Activated T-helper 2 cell treated with anti-CD3 and anti-CD28 coated beads, Interferon-gamma antibody, Interleukin-2, Interleukin-4, amounts not matched to agents 10 μg/mL and 5 μg/mL and 100 μg/mL, durations not matched to agents 14 hours and 24 hours and 36 hours (primary cell): ENCODE measurements at regions of chr12 and their contacts with region 1.

Region 1: DNA sequence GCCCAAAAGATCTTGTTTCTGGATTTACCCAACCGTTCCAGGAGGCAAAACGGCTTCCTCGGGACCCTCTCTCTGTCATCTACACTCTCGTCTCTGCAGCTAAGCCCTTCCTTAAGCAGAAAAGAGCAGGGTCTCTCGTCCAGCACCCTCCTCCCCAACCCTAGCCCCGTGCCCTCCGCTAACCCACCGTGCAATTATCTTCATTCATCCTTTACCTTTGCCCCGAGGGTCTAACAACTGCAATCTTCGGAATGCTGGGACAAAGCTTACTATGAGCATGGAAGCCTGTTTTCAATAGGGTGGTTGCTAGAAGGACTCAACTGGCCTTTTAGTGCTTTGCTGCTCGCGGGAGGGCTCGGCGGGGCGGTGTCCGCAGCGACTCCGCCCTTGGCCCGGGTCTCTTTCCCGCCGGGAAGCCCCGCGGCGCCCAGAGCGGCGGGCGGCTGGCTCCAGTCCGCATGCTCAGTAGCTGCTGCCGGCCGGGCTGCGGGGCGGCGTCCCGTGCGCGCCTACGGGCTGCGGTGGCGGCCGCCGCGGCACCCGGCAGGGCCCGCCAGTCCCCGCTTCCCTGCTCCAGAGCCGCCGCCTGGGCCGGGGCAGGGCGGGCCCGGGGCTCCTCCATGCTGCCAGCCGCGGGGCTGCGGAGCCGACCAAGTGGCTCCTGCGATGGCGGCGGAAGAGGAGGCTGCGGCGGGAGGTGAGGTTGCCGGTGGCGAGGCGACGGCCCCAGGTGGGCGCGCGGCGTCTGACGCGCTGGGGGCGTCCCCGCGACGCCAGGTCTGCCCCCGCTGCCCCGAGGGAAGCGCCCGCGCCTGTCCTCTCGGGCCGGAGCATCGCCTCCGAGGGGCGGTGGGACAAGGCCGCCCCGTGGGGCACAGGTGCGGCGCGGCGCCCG is at the start of gene BMAL2:
- DNase-seq: peak; percentile 40
- H3K4me3 Mint-ChIP-seq: peak within 1 kb of the TSS; percentile 98
- H3K27ac Mint-ChIP-seq: peak within 1 kb of the TSS; percentile 96
- H3K4me1 Mint-ChIP-seq: peaks cover 50% of the 10 kb centered on the region
- H3K27me3 Mint-ChIP-seq: no peaks in the 10 kb centered on the region
- total RNA-seq, gene BMAL2: 58.9 and 59.6 TPM in 2 replicates

Region 2: DNA sequence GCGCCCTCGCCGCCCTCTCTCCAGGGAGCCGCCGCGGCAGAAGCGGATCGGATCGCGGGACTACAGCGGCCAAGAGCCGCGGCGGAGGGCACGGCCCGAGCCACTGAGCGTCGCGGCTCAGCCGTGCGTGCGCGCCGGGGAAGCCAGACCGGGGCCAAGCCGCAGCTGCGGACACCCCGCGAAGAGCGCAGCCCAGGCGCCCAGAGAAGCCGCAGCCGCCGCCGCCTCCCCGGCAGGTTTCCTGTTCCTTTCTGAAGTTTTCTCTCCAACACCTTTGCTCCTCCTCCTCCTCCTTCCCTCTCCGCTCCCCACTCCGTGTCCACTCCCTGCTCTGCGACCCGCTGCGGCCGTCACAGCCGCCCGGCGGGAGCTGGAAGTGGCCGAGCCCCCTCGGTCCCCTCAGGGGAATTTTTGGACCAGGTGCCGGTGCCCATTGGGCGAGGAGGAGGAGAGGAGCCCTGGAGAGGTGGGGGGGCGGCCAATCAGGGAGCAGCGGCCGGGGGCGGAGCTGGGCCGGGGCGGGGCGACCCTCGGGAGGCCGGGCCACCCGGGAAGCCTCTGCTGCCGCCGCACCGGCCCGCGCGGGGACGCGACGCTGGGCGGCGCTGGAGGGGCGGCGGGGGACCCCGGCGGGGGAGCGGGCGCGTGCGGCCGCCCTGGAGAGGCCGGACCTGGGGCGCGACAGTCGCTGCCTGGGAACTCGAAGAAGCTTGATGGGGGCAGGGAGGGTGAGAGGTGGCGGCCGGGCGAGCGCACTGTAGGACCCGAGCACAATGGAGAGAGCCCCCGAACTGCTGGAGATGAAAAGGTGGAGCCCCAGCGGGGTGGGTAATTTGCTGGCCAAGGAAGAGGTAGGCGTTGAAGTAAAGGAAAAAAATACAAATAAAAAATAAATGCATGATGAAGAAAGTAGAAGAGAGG is 499.6 kb before region 1 on chr12 and contains the start of gene ITPR2:
- intact Hi-C with region 1: loop called (anchors 2 kb)
- DNase-seq: peak; percentile 88
- H3K4me3 Mint-ChIP-seq: peak within 1 kb of the TSS; percentile 95
- H3K27ac Mint-ChIP-seq: peak within 1 kb of the TSS; percentile 98
- H3K4me1 Mint-ChIP-seq: peaks cover 46% of the 10 kb centered on the region
- H3K27me3 Mint-ChIP-seq: no peaks in the 10 kb centered on the region
- total RNA-seq, gene ITPR2: 49.3 and 49.6 TPM in 2 replicates

Region 3: DNA sequence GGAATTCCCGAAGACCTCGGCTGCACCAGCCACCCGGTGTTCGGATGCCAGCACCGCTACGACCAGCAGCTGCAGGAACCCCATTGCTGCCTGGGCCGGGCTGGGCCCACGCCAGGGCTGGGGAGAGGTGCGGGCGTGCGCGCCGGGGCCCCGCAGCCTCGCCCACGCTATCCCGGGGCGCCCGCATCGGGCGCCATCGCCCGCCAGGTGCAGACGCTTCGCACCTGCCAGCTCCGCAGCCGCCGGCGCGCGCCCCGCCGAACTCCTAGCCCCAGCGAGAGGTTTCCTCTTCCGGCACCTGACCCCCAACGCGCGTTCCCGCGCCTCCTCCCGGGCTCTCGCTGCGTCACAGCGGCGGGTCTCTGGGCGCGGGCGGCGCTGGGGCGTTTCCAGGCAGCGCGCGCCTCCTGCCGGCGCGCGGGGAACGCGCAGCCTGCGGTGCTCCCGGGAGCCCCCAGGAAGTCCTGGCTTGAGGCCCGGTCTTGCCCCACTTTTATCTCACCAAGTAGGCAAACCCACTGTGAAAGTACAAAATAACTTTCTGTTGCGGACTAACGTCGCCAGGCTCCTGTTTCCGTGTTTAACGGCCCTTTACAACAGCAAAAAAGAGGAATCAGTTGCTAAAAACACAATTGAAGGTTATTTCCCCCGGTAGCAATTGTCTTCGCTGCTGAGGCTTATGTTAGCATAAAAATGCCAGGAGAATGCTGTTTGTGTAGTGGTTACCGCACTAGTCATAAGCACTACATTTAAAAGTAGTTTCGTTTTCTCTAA is 318.4 kb before region 1 on chr12 and contains the start of gene TM7SF3:
- intact Hi-C with region 1: loop called (anchors 2 kb)
- DNase-seq: peak; percentile 94
- H3K4me3 Mint-ChIP-seq: peak within 1 kb of the TSS; percentile 93
- H3K27ac Mint-ChIP-seq: peak within 1 kb of the TSS; percentile 89
- H3K4me1 Mint-ChIP-seq: peaks cover 57% of the 10 kb centered on the region
- H3K27me3 Mint-ChIP-seq: no peaks in the 10 kb centered on the region
- total RNA-seq, gene TM7SF3: 46.7 and 51.5 TPM in 2 replicates

Region 4: DNA sequence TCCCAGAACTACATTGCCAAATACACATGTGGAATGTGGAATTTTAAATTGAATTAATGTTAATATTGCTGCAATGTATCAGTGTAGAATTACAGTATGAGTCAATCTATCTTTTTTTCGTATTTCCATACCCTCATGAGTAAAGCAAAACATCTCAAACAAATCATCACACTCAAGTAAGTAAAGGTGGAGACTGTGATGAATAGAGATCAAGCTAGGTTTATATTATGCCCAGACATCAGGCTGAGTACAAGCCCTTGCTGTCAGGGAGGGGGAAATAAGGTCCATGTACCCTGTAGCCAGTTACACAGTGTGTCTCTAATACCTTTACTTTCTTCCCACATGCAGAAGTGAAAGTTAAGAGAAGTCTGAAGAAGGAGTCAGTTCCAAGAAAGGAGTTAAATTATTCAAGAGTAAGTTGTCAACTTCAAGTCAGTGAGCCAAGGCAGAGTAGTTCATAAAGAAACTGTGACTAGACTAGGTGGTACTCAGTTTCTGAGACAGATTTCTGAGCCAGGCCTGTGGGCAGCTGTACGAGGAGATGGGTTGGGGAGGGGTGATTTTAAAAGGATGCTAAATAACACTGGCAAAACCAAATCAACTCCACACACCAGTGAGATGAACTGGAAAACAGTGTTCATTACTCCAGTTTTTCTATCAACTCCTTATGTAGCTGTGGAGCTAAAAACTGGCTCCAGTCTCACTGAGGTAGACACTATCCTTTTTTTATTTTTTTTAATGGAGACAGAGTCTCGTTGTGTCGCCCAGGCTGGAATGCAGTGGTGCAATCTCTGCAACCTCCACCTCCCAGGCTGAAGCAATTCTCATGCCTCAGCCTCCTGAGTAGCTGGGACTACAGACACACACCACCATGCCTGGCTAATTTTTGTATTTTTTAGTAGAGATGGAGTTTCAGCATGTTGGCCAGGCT is 112.3 kb before region 1 on chr12:
- intact Hi-C with region 1: no loop called
- DNase-seq: no peak
- H3K4me3 Mint-ChIP-seq: no peak overlapping the region
- H3K27ac Mint-ChIP-seq: peak overlapping the region; percentile 34
- H3K4me1 Mint-ChIP-seq: peaks cover 15% of the 10 kb centered on the region
- H3K27me3 Mint-ChIP-seq: no peaks in the 10 kb centered on the region

Region 5: GRCh38 chr12:27243804-27244683 is 88.6 kb before region 1 on chr12 and contains the start of gene STK38L:
- intact Hi-C with region 1: loop called (anchors 5 kb)
- DNase-seq: peak; percentile 96
- H3K4me3 Mint-ChIP-seq: peak within 1 kb of the TSS; percentile 96
- H3K27ac Mint-ChIP-seq: peak within 1 kb of the TSS; percentile 94
- H3K4me1 Mint-ChIP-seq: peaks cover 35% of the 10 kb centered on the region
- H3K27me3 Mint-ChIP-seq: no peaks in the 10 kb centered on the region
- total RNA-seq, gene STK38L: 23.4 and 24.2 TPM in 2 replicates

Region 6: DNA sequence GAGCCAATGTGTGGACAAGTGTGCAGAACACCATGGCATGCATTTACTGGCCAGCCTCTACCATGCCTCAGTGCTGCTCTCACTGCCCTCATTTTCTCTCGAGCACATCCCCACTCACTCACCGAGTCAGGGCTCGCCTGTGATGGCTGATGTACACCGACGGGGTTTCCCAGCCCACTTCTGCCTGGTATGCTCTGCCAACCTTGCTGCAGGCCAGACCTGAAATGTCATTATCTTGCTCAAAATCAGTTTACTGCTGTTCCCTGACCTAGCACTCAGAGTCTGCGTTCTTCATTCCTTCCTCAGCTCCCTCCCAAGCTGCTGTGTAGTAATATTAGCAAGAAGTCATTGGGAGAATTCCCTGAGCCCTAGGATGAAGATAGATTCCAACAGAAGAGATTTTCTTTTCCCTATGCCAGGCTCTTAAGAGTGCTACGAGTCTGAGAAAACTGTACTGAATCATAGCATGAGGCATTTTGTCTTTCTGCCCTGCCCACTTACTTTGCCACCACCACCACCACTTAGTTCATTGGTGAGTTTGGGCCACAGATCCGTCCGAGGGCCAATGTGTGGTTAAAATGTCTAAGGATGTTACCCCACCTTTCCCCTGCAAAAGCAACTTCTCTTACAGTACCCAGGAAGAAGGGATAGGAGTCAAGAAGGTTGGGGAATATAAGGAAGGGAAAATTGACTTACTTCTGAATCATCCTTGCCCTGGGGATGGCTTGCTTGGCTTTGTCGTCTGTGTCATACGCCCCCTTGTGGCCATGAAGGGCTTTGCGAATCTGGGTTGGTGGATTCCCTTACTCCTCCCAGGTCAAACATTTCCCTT is 51.0 kb after region 1 on chr12:
- intact Hi-C with region 1: loop called (anchors 5 kb)
- DNase-seq: peak; percentile 52
- H3K4me3 Mint-ChIP-seq: no peak overlapping the region
- H3K27ac Mint-ChIP-seq: no peak overlapping the region
- H3K4me1 Mint-ChIP-seq: peaks cover 5% of the 10 kb centered on the region
- H3K27me3 Mint-ChIP-seq: no peaks in the 10 kb centered on the region

Region 7: DNA sequence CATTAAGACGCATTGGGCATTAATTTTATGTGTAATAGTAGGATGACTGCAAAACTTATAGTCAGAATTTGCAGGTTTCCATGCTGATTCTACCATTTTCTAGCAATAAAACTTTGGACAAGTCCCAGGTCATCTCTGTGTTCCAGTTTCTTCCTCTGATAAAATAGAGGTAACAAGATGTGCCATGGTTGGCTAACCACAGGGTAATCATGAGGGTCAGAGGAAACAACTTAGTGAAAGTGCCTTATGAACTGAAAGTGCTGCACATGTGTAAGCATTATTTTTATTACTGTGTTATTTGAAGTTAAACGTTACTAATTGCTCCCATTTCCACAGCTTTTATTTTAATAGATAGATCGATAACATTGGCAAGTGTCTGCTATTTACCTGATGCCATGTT is 135.0 kb after region 1 on chr12:
- intact Hi-C with region 1: no loop called
- DNase-seq: no peak
- H3K4me3 Mint-ChIP-seq: no peak overlapping the region
- H3K27ac Mint-ChIP-seq: no peak overlapping the region
- H3K4me1 Mint-ChIP-seq: peaks cover 39% of the 10 kb centered on the region
- H3K27me3 Mint-ChIP-seq: peaks cover 3% of the 10 kb centered on the region

Region 8: GRCh38 chr12:27488479-27488878 is 155.8 kb after region 1 on chr12:
- intact Hi-C with region 1: no loop called
- DNase-seq: no peak
- H3K4me3 Mint-ChIP-seq: no peak overlapping the region
- H3K27ac Mint-ChIP-seq: no peak overlapping the region
- H3K4me1 Mint-ChIP-seq: peaks cover 4% of the 10 kb centered on the region
- H3K27me3 Mint-ChIP-seq: peaks cover 20% of the 10 kb centered on the region

Region 9: DNA sequence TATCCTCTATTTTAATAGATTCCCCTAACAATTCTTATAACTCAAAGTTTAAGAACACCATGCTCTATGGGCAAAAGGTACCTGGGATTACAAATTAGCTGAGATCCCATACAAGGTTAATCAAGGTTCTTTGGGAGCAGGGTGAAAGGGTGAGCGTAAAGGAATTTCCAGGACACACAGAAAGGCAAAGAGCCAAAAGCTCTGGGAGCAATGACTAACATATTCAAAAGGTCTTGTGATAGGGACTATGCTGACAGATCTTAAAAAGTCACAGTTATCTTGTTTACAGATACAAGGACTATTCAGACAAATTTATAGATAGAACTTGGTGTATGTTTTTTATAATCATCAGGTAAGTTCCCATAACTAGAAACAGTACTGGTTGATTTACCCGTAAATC is 171.9 kb after region 1 on chr12:
- intact Hi-C with region 1: loop called (anchors 10 kb)
- DNase-seq: no peak
- H3K4me3 Mint-ChIP-seq: no peak overlapping the region
- H3K27ac Mint-ChIP-seq: no peak overlapping the region
- H3K4me1 Mint-ChIP-seq: peaks cover 30% of the 10 kb centered on the region
- H3K27me3 Mint-ChIP-seq: peaks cover 32% of the 10 kb centered on the region

Region 10: DNA sequence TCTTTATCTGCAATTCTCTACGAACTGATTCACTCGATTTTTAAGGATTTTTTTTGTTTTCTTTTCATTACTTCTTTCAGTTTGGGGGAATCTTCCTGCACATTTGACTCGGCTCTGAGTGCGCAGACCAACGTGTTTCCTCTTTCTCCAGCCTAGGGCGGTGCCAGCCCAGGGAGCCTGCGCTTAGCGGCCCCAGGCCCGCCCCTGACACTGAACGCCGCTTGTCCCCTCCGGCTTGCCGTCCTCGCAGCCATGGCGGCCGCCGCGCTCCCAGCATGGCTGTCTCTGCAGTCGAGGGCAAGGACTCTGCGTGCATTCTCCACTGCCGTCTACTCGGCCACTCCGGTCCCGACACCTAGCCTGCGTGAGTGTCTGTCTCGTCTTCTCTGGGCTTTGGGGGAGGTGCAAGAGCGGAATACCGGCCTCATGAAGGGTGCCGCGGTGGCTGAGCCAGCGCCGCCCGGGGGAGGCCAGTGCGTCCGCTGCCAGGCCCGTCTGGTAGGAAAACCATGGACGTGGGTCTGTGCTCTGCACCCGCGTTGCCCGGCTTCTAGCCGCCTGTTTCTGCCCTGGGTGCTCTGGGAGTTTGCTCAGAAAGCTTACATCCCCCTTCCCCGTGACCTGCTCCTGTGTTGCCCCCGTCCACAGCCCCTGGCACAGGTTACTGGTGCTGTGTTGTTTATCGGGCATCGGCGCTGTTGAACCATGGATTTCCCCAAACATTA is 378.1 kb after region 1 on chr12 and contains the start of gene MRPS35:
- intact Hi-C with region 1: loop called (anchors 2 kb)
- DNase-seq: peak; percentile 90
- H3K4me3 Mint-ChIP-seq: peak within 1 kb of the TSS; percentile 95
- H3K27ac Mint-ChIP-seq: peak within 1 kb of the TSS; percentile 94
- H3K4me1 Mint-ChIP-seq: peaks cover 21% of the 10 kb centered on the region
- H3K27me3 Mint-ChIP-seq: peaks cover 7% of the 10 kb centered on the region
- total RNA-seq, gene MRPS35: 53.6 and 54.0 TPM in 2 replicates